ENCODE measurements at regions of chr4 and their contacts with region 1.

Region 1: GRCh38 chr4:46329118-46329976 is 60.6 kb downstream of the GABRA2 start:
- DNase-seq: peak; percentile 7 to 47
- H3K4me3 ChIP-seq: no peak overlapping the region
- H3K27ac ChIP-seq: no peak overlapping the region
- H3K4me1 ChIP-seq: peaks cover 0 to 2% (median 0%) of the 10 kb centered on the region in 4 experiments; a peak in 1 of 7 replicates
- H3K27me3 ChIP-seq: no peaks in the 10 kb centered on the region
- CTCF ChIP-seq: peak in 2 of 3 experiments; percentile 73 to 78; a peak in 3 of 4 replicates
- EP300 ChIP-seq: no peak
- POLR2A ChIP-seq: no peak
- RAD21 ChIP-seq: peak; percentile 85 to 90

Region 2: DNA sequence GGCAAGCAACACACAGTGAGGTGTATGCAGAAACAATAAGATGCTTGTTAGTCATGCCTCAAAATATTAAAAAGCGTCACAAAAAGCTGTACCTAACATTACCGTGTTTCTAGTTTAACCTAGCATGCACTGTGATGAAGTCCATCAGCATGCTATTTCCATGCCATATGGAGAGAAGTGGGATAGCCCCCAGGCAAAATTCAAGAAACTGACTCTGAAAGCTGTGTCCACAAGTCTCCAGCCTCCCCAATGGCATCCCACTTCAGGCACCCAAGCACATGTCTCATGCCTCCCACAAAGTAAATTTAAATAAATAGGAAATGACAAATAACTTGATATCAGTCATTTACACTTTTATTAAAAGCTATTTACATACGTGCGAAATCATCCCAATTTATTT is 49.8 kb after region 1 on chr4:
- CTCF ChIA-PET with region 1: interaction called, 13 read pairs
- POLR2A ChIA-PET with region 1: no interaction called
- DNase-seq: no peak
- H3K4me3 ChIP-seq: no peak overlapping the region
- H3K27ac ChIP-seq: no peak overlapping the region
- H3K4me1 ChIP-seq: no peaks in the 10 kb centered on the region
- H3K27me3 ChIP-seq: no peaks in the 10 kb centered on the region
- CTCF ChIP-seq: no peak
- EP300 ChIP-seq: no peak
- POLR2A ChIP-seq: no peak
- RAD21 ChIP-seq: no peak